ENCODE measurements at regions of chr18 and their contacts with region 1.

Region 1: GRCh38 chr18:34661464-34662111 is 48.5 kb upstream of the DTNA start:
- DNase-seq: peak; percentile 50
- ATAC-seq: peak; percentile 60
- H3K4me3 ChIP-seq: no peak overlapping the region
- H3K27ac ChIP-seq: no peak overlapping the region
- H3K4me1 ChIP-seq: peaks cover 11% of the 10 kb centered on the region; the same call in 1 of the 2 replicates
- H3K27me3 ChIP-seq: no peaks in the 10 kb centered on the region
- CTCF ChIP-seq: peak; percentile 61

Region 2: DNA sequence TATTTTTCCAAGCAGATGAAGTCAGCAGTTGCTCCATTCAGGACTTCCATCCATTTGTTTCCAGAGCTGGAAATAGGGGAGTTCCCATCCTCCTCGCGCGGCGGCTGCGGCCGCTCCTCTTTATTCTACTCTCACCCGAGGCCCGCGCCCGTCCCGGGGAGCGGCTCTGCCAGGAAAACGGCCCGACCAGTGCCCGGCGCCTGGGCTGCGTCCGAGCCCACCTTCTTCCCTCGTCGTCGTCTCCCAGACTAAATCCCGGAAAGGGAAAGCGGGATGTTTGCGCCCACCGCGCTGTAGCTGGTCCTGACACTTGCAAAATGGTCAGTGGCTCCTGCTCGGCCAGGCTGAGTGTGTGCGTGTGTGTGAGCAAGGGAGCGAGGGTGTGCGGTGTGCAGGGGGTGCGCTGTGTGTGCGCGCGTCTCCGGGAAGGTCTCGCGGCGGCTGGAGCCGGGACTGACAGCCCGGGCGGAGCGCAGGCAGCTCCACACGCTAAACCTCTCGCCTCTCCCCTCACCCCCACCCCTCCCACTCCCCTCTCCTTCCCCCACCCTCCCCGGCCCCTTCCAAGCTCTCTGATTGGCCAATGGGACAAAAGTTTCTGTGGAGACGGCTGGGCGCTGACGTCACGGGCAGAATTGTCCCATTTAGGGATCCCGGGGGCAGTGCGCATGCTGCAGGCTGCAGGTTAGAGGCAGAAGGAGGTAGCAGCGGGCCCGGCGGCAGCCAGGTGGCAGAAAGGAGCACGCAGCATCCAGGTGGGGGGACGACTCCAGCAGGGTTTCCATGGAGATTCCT is 437.0 kb before region 1 on chr18 and contains the start of gene NOL4:
- CTCF ChIA-PET with region 1: no interaction called
- POLR2A ChIA-PET with region 1: no interaction called
- intact Hi-C with region 1: loop called (anchors 10 kb)
- DNase-seq: peak; percentile 36
- ATAC-seq: peak; percentile 64
- H3K4me3 ChIP-seq: peak within 1 kb of the TSS; percentile 66
- H3K27ac ChIP-seq: no peak within 1 kb of the TSS
- H3K4me1 ChIP-seq: peaks cover 3% of the 10 kb centered on the region; the same call in 1 of the 2 replicates
- H3K27me3 ChIP-seq: peaks cover 46% of the 10 kb centered on the region
- CTCF ChIP-seq: peak; percentile 48
- total RNA-seq, gene NOL4: not detected in 2 replicates

Region 3: DNA sequence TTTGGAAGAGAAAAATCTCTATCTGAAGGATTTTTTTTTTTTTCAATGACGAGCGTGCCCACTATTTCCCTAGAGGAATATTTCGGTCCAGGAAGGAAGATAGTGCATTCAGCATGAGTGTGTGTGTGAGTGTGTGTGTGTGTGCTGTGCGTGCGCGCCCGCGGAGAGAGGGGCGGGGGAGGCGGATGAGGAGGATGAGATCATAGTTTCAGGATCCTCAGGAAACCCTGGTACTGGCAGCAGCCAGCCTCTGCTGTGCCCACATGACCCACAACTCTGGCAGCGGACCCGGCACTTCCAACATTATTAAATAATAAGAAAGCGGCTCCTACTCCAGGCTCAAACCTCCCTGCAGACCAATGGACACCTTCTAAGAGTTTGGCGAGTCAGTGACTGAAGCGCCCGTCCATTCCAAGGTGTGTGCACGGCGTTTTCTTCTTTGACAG is 168.5 kb before region 1 on chr18:
- CTCF ChIA-PET with region 1: no interaction called
- POLR2A ChIA-PET with region 1: no interaction called
- intact Hi-C with region 1: loop called (anchors 10 kb)
- DNase-seq: peak; percentile 64
- ATAC-seq: peak; percentile 75
- H3K4me3 ChIP-seq: peak overlapping the region; percentile 70
- H3K27ac ChIP-seq: peak overlapping the region; percentile 79
- H3K4me1 ChIP-seq: peaks cover 6% of the 10 kb centered on the region; the same call in 1 of the 2 replicates
- H3K27me3 ChIP-seq: no peaks in the 10 kb centered on the region
- CTCF ChIP-seq: no peak

Region 4: DNA sequence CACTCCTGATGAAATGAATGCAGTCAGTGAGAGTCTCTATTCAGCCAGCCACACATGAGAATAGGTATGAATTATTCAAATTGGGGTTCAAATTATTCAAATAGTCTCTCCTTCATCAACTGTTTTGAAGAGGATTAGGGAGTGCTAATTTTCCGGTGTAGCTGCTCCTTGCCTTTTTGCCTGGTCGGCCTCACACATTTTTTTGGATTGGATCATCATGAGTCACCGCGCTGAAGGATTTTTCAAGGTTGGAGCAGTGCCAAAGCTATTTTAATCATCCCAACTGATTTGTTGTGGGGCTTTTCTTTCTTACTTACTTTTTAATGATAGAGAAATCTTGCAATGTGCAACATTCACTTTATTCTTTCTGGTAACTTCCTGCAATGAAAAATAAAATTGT is 46.1 kb after region 1 on chr18:
- CTCF ChIA-PET with region 1: no interaction called
- POLR2A ChIA-PET with region 1: no interaction called
- intact Hi-C with region 1: loop called (anchors 5 kb)
- DNase-seq: peak; percentile 83
- ATAC-seq: peak; percentile 74
- H3K4me3 ChIP-seq: peak overlapping the region; percentile 33; the same call in 1 of the 2 replicates
- H3K27ac ChIP-seq: peak overlapping the region; percentile 49
- H3K4me1 ChIP-seq: peaks cover 28% of the 10 kb centered on the region
- H3K27me3 ChIP-seq: no peaks in the 10 kb centered on the region
- CTCF ChIP-seq: no peak

Region 5: GRCh38 chr18:34723143-34723542 is 61.6 kb after region 1 on chr18:
- CTCF ChIA-PET with region 1: no interaction called
- POLR2A ChIA-PET with region 1: no interaction called
- intact Hi-C with region 1: loop called (anchors 5 kb)
- DNase-seq: peak; percentile 5
- ATAC-seq: 0 out of 2 replicates have a peak, but pooled peaks have one; percentile 38
- H3K4me3 ChIP-seq: no peak overlapping the region
- H3K27ac ChIP-seq: no peak overlapping the region
- H3K4me1 ChIP-seq: no peaks in the 10 kb centered on the region
- H3K27me3 ChIP-seq: no peaks in the 10 kb centered on the region
- CTCF ChIP-seq: no peak

Region 6: GRCh38 chr18:34787931-34788532 is 126.4 kb after region 1 on chr18:
- CTCF ChIA-PET with region 1: interaction called, 7 read pairs
- POLR2A ChIA-PET with region 1: no interaction called
- intact Hi-C with region 1: loop called (anchors 1 kb)
- DNase-seq: peak; percentile 58
- ATAC-seq: no peak
- H3K4me3 ChIP-seq: no peak overlapping the region
- H3K27ac ChIP-seq: no peak overlapping the region
- H3K4me1 ChIP-seq: no peaks in the 10 kb centered on the region
- H3K27me3 ChIP-seq: no peaks in the 10 kb centered on the region
- CTCF ChIP-seq: peak; percentile 58

Region 7: GRCh38 chr18:35192415-35192814 is 530.8 kb after region 1 on chr18:
- CTCF ChIA-PET with region 1: no interaction called
- POLR2A ChIA-PET with region 1: no interaction called
- intact Hi-C with region 1: no loop called
- DNase-seq: no peak
- ATAC-seq: no peak
- H3K4me3 ChIP-seq: no peak overlapping the region
- H3K27ac ChIP-seq: no peak overlapping the region
- H3K4me1 ChIP-seq: no peaks in the 10 kb centered on the region
- H3K27me3 ChIP-seq: no peaks in the 10 kb centered on the region
- CTCF ChIP-seq: no peak

Measured in PC-3 (cell line).